Esophagus muscularis mucosa (tissue), 4 donors: ENCODE measurements at regions of chr16 and their contacts with region 1.

Region 1: DNA sequence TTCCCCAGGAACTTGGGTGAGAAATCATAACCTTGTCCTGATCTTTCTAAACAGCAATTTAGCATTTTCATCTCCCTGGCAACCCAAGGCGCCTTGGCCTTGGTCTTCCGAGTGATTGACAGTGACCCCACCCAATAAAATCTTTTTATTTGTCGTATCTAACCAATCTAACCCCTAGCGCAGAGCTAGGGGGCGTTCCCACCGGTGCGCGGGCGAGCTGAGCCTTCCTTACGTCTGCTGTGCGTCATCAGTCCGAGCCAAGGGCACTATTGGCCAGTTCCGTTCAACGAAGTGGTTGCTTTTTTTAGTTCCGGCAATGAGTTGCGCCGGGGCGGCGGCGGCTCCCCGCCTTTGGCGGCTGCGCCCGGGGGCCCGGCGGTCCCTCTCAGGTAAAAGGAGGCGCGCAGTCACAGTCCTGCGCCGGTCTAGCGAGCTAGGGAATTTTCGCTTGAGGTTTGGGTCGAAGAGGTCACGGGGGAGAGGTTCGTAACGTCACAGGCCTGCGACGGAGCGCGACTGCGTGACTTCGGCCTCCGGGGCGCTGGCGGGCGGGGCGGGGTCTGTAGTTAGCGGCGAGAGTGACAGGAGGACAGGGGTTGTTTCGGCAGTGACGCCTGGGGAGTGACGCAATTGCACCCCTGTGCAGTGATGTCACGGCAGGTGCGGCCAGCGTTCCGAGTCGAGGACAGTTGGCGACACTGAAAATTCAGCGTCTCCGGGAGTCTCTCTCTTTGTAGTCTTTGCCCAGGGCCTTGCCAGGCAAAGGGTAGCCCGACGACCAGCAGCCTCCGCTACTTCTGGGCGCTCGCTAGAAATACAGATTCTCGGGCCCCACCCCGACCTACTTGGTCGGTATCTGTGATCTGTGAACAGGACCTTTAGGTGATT is at the start of gene COQ7:
- DNase-seq: peak; percentile 100
- H3K4me3 ChIP-seq: peak within 1 kb of the TSS; percentile 76 to 86 (median 78)
- H3K27ac ChIP-seq: peak within 1 kb of the TSS; percentile 97 to 99 (median 98)
- H3K4me1 ChIP-seq: peaks cover 14 to 27% (median 25%) of the 10 kb centered on the region in 4 donors
- H3K27me3 ChIP-seq: no peaks in the 10 kb centered on the region
- CTCF ChIP-seq: peak in 1 of 3 experiments; percentile 19
- EP300 ChIP-seq: peak; percentile 51
- POLR2A ChIP-seq: no peak
- total RNA-seq, gene COQ7: 19.1 to 31.2 (median 28.8) TPM

Region 2: GRCh38 chr16:18932243-18932981 is 135.2 kb before region 1 on chr16:
- intact Hi-C with region 1: no loop called
- DNase-seq: no peak
- H3K4me3 ChIP-seq: no peak overlapping the region
- H3K27ac ChIP-seq: peak overlapping the region; percentile 60 to 77 (median 69)
- H3K4me1 ChIP-seq: peaks cover 7 to 21% (median 20%) of the 10 kb centered on the region in 4 donors
- H3K27me3 ChIP-seq: no peaks in the 10 kb centered on the region
- CTCF ChIP-seq: no peak
- EP300 ChIP-seq: no peak
- POLR2A ChIP-seq: no peak

Region 3: GRCh38 chr16:18959031-18959505 is 108.5 kb before region 1 on chr16:
- intact Hi-C with region 1: no loop called
- DNase-seq: no peak
- H3K4me3 ChIP-seq: no peak overlapping the region
- H3K27ac ChIP-seq: no peak overlapping the region
- H3K4me1 ChIP-seq: peaks cover 4 to 11% (median 9%) of the 10 kb centered on the region in 4 donors
- H3K27me3 ChIP-seq: no peaks in the 10 kb centered on the region
- CTCF ChIP-seq: no peak
- EP300 ChIP-seq: no peak
- POLR2A ChIP-seq: no peak

Region 4: GRCh38 chr16:18983565-18984424 is 83.8 kb before region 1 on chr16 and contains the start of gene TMC7:
- intact Hi-C with region 1: loop called (anchors 5 kb)
- DNase-seq: no peak
- H3K4me3 ChIP-seq: peak within 1 kb of the TSS; percentile 58 to 77 (median 68)
- H3K27ac ChIP-seq: peak within 1 kb of the TSS; percentile 57 to 82 (median 77)
- H3K4me1 ChIP-seq: peaks cover 6 to 14% (median 12%) of the 10 kb centered on the region in 4 donors
- H3K27me3 ChIP-seq: peaks cover 0 to 13% (median 0%) of the 10 kb centered on the region in 4 donors
- CTCF ChIP-seq: peak; percentile 53 to 63 (median 59)
- EP300 ChIP-seq: no peak
- POLR2A ChIP-seq: no peak
- total RNA-seq, gene TMC7: 0.17 to 0.83 (median 0.56) TPM

Region 5: DNA sequence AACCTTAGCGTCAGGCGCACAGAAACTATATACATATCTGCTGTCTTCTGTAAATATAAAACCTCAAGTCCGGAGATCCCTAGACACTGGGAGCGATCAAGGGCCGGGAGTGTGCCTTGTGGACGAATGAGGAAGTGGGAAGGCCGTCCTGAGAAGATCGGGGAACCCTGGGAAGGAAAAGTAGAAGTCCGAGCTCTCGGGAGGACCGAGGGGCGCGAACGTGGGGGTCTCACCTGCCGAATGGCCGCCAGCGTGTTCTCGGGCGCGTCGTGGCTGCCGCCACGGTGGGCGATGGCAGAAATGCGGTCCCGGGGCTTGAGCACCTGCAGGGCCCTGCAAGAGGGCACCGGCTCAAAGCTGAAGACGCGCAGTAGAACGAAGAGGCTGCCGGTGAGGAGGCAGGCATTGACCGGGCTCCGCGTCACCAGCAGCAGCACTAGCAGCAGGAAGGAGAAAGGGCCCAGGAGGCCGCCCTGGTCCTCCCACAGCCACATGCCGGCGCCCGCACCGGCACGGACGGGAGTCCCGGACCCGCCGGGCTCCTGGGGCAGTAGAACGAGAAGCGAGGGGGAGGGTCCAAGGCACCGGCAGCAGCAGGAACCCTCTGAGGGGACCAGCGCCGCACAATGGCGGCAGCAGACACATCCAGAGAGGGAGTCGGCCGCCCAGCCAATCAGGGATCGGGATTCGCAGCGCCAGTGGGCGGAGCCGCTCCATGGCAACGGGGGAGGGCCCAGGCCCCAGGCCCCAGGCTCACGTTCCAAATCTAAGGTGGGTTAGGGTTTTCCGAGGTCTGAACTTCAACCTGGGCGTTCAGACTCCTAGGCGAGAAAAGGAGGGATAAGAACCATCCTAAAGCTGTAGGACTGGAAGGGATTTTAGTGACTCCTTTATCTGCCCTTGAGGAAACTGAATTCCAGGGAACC is 454.1 kb after region 1 on chr16 and contains the start of gene GDE1:
- intact Hi-C with region 1: loop called (anchors 10 kb)
- DNase-seq: peak; percentile 98
- H3K4me3 ChIP-seq: peak within 1 kb of the TSS; percentile 80 to 92 (median 88)
- H3K27ac ChIP-seq: peak within 1 kb of the TSS; percentile 88 to 97 (median 93)
- H3K4me1 ChIP-seq: peaks cover 31 to 73% (median 63%) of the 10 kb centered on the region in 4 donors
- H3K27me3 ChIP-seq: no peaks in the 10 kb centered on the region
- CTCF ChIP-seq: peak in 2 of 3 experiments; percentile 20 to 26
- EP300 ChIP-seq: no peak
- POLR2A ChIP-seq: peak; percentile 76
- total RNA-seq, gene GDE1: 90.9 to 124 (median 109) TPM